HEK293T (cell line): ENCODE measurements at regions of chr12 and their contacts with region 1.

Region 1: DNA sequence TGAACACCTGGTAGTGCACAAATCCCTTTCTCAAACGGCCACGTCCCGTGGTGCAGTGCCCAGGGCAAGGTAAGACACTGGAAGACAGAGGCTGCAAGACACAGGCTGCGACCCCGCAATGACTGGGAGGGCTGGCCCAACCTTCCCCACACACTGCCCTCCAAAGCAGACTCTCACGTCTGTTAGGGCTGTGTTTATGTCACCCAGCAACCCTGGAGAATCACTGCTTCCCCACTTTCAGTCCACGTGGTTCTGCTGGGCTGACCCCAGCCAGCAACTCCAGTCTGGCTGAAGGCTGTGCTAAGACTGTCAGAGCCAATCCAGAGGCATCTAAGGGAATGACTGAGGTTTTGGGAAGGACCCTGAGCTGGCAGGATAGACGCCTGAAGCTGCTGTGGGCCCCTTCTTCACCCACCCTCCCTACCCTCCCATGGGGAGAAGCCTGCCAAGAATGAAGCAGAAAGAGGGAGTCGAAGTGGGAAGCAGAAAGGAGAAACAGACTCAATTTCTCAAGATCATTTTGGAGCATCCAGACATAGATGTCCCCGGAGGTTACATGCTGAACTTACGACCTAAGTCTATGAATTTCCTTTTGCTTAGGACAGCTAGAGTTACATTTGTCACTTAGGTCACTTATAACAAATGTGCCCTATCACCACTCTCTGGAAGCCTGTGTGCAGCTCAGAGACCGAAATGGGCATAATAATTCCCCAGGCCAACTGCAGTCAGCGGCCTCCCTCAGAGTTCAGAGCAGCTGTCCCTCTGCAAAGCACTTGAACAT is 11.7 kb downstream of the KDM2B start:
- DNase-seq: no peak

Region 2: DNA sequence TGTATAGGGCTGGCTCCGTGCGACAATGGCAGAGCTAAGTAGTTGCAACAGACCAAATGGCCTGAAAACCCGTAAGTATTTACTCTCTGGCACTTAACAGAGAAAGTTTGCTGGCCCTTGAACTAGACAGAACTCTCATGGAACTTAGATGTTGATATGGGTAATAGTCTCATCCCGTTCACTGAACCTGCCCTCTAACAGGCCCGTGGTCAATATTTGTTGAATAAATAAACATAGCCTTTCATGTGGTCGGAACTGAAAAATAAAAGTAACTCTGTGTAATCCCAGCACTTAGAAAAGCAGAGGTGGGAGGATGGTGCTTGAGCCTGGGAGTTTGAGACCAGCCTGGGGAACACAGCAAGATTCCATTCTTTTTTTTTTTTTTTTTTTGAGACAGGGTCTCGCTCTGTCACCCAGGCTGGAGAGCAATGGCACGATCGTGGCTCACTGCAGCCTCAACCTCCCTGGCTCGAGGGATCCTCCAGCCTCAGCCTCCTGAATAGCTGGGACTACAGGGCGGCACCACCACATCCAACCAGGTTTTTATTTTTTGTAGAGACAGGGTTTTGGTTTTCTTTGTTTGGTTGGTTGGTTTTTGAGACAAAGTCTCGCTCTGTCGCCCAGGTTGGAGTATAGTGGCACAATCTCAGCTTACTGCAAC is 18.1 kb before region 1 on chr12:
- CTCF ChIA-PET with region 1: interaction called, 10 read pairs
- POLR2A ChIA-PET with region 1: no interaction called
- DNase-seq: no peak